Activated T-helper 1 cell treated with anti-CD3 and anti-CD28 coated beads, Interleukin-12 subunit alpha, Interleukin-12 subunit beta, Interleukin-2, Interleukin-4 antibody, amounts not matched to agents 30 ng/mL and 10 ng/mL and 1 ng/mL, durations not matched to agents 14 hours and 24 hours and 36 hours (primary cell): ENCODE measurements at regions of chr9 and their contacts with region 1.

Region 1: GRCh38 chr9:127224178-127224882 is 40.2 kb upstream of the GARNL3 start:
- DNase-seq: peak; percentile 82
- H3K4me3 Mint-ChIP-seq: peak overlapping the region; percentile 85
- H3K27ac Mint-ChIP-seq: peak overlapping the region; percentile 97
- H3K4me1 Mint-ChIP-seq: peaks cover 18% of the 10 kb centered on the region
- H3K27me3 Mint-ChIP-seq: peaks cover 42% of the 10 kb centered on the region

Region 2: DNA sequence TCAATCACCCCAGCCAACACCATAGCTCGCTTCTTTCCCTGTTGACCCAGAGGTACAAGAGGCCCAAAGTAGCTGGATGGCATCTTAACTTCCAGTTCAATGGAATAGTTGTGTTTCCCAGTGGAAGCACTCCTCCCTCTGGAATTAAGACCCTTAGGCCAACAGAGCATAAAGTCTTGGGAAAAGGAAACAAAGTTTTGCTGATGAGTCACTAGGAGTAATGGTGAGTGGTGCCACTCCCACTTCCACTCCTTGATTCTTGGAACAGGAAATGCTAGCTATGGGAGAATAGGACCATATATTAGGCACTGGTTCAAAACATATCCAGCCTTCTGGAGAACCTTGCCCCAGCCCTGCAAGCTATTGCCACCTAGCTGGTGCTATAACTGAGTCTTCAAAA is 655.3 kb before region 1 on chr9:
- intact Hi-C with region 1: no loop called
- DNase-seq: no peak
- H3K4me3 Mint-ChIP-seq: no peak overlapping the region
- H3K27ac Mint-ChIP-seq: no peak overlapping the region
- H3K4me1 Mint-ChIP-seq: no peaks in the 10 kb centered on the region
- H3K27me3 Mint-ChIP-seq: peaks cover 6% of the 10 kb centered on the region

Region 3: DNA sequence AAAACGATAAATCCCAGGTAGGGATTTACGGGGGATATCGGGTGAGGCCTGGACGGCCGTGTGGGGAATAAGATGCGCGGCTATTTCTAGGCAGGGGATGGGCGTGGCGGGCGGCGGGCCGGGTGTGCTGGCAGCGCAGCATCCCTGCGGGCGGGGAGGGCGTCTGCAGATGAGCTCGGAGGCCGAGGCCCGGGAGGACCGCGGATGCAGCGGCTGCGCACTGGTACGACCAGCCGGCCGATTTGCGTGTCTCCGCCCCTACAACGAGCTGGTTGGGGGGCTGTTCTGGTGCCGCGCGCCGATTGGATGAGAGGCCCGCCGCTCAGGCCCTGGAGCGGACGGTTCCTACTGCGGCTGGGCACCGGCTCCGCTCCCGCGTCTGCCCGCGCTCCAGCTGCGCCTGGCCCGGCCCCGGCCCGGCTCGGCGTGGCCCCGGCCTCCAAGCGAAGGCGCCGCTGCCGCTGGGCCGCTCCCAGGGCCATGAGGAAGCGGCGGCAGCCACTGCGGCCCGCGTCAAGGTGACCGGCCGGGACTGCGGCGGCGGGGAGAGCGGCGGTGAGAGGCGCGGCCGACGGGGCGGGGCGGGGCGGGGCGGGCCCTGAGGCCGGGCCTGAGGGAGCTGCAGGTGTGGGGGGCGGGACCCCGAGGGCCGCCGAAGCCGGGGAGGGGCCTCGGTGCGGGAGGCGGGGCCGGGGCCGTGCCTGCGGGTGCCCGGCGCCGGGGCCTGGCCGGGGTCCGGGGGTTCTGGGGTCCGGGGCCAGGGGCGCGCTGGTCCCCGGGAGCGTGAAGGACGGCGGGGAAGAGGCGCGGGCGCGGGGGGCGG is 309.7 kb before region 1 on chr9 and contains the start of gene RALGPS1:
- intact Hi-C with region 1: loop called (anchors 1 kb)
- DNase-seq: peak; percentile 91
- H3K4me3 Mint-ChIP-seq: peak within 1 kb of the TSS; percentile 73
- H3K27ac Mint-ChIP-seq: no peak within 1 kb of the TSS
- H3K4me1 Mint-ChIP-seq: peaks cover 6% of the 10 kb centered on the region
- H3K27me3 Mint-ChIP-seq: peaks cover 17% of the 10 kb centered on the region
- total RNA-seq, gene RALGPS1: 1.4 and 1.8 TPM in 2 replicates

Region 4: DNA sequence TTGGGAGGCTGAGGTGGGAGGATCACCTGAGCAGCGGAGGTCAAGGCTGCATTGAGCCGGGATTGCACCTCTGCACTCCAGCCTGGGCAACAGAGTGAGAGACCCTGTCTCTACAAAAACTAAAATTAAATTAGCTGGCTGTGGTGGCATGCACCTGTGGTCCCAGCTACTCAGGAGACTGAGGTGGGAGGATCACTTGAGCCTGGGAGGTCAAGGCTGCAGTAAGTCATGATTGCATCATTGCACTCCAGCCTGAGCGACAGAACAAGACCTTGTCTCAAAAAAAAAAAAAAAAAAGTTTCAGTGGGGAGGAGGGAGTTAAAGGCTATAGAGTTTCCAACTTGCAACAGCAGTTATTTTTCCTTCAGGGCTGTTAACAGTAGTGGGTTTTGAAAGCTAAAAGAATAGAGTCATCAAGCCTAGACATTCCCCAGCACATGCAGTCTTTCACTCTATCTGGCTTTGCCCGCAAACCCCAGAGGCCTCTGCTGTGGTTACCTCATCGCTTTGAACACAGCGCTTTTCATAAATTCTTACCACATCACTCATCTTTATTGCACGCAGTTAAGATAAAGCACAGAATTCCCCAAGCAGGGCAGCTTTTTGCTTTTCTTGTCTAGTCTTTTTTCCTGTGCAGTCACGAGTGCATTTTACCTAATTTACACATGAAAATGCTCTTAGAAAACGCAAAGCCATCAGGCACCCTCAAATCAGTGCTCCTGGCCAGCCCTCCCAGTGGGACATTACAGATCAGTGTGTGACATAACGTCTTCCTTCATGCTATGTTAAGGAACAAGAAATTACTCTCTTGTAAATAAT is 163.9 kb after region 1 on chr9:
- intact Hi-C with region 1: loop called (anchors 2 kb)
- DNase-seq: peak; percentile 86
- H3K4me3 Mint-ChIP-seq: peak overlapping the region; percentile 37
- H3K27ac Mint-ChIP-seq: peak overlapping the region; percentile 89
- H3K4me1 Mint-ChIP-seq: peaks cover 24% of the 10 kb centered on the region
- H3K27me3 Mint-ChIP-seq: peaks cover 51% of the 10 kb centered on the region

Region 5: GRCh38 chr9:127423934-127424675 is 199.8 kb after region 1 on chr9 and contains the start of gene ZNF79:
- intact Hi-C with region 1: loop called (anchors 1 kb)
- DNase-seq: peak; percentile 92
- H3K4me3 Mint-ChIP-seq: peak within 1 kb of the TSS; percentile 99
- H3K27ac Mint-ChIP-seq: peak within 1 kb of the TSS; percentile 97
- H3K4me1 Mint-ChIP-seq: peaks cover 59% of the 10 kb centered on the region
- H3K27me3 Mint-ChIP-seq: peaks cover 3% of the 10 kb centered on the region
- total RNA-seq, gene ZNF79: 21.7 and 23.1 TPM in 2 replicates

Region 6: GRCh38 chr9:127535834-127536233 is 311.5 kb after region 1 on chr9:
- intact Hi-C with region 1: no loop called
- DNase-seq: no peak
- H3K4me3 Mint-ChIP-seq: no peak overlapping the region
- H3K27ac Mint-ChIP-seq: no peak overlapping the region
- H3K4me1 Mint-ChIP-seq: no peaks in the 10 kb centered on the region
- H3K27me3 Mint-ChIP-seq: no peaks in the 10 kb centered on the region

Region 7: GRCh38 chr9:129036241-129036922 is 1812.1 kb after region 1 on chr9 and contains the start of gene MIGA2:
- intact Hi-C with region 1: loop called (anchors 10 kb)
- DNase-seq: peak; percentile 95
- H3K4me3 Mint-ChIP-seq: peak within 1 kb of the TSS; percentile 97
- H3K27ac Mint-ChIP-seq: peak within 1 kb of the TSS; percentile 79
- H3K4me1 Mint-ChIP-seq: peaks cover 20% of the 10 kb centered on the region
- H3K27me3 Mint-ChIP-seq: peaks cover 2% of the 10 kb centered on the region
- total RNA-seq, gene MIGA2: 43.4 and 43.8 TPM in 2 replicates